Tibial artery (tissue), 4 donors: ENCODE measurements at regions of chr1 and their contacts with region 1.

Region 1: DNA sequence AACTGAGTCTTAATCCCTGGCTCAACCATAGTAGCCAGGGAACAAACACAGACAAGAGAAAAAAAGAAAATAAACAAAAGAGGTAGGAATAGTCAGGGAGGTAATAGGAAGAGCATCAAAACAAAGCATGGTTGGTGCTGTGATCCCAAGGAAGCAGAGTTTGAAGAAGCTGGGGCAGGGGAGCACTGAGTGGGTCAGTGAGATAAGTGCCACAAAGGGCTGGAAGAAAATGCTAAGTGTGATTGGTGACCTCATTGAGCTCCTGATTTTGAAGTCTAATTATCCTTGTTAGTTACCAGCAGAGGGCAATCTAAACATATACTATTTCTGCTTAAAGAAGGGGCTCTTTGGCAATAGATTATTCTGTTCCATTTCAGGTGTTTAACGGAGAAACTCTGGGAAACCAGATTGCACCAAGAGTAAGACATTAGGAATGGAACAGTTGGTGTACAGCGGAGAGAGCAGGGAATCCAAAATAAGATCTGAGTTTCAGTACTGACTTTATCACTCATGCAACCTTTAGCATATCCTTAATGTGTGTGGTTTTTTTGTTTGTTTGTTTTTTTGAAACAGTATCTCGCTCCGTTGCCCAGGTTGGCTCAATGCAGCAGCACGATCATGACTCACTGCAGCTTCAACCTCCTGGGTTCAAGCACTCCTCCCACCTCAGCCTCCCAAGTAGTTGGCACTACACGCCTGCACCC is 30.7 kb upstream of the KIAA1614 start:
- DNase-seq: no peak
- H3K4me3 ChIP-seq: no peak overlapping the region
- H3K27ac ChIP-seq: no peak overlapping the region
- H3K4me1 ChIP-seq: no peaks in the 10 kb centered on the region
- H3K27me3 ChIP-seq: no peaks in the 10 kb centered on the region
- CTCF ChIP-seq: peak; percentile 31 to 47

Region 2: GRCh38 chr1:181112071-181112929 is 230.3 kb after region 1 on chr1:
- intact Hi-C with region 1: no loop called
- DNase-seq: peak; percentile 83 to 88
- H3K4me3 ChIP-seq: no peak overlapping the region
- H3K27ac ChIP-seq: peak overlapping the region; percentile 24 to 53
- H3K4me1 ChIP-seq: peaks cover 0 to 25% (median 18%) of the 10 kb centered on the region in 4 donors
- H3K27me3 ChIP-seq: no peaks in the 10 kb centered on the region
- CTCF ChIP-seq: no peak

Region 3: DNA sequence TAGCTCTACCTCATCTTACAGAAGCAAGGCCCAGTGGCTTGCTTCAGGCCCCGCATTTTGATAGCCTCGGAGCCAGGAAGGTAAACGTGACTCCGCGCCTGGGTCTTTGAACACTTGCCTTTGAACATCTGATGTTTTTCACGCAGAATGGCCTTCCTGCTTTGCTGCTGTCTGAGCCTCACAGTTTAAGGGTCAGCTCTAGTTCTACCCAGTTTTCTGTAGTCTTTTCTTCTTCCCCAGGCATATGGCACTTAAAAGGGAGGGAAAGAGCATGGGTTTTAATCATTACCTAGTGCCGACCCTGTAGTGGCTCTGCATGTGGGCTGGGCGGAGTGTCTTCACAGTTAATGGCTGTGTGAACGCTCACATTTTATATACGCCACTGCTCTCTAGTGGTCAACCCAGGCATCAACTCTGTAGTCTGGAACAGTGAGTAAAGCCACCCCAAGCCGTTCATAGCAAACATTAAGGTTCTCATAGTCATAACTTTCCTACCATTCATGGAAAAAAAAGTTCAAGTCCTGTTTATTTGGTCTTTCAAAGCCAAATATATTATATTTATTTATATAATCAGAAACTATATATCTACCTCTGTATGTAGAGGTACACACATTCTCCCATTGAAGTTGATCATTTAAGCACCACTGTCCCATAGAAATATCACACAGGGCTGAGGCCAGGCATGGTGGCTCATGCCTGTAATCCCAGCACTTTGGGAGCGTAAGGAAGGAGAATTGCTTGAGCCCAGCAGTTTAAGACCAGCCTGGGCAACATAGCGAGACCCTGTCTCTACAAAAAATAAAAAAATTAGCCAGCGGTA is 284.6 kb after region 1 on chr1:
- intact Hi-C with region 1: loop called (anchors 2 kb)
- DNase-seq: peak; percentile 58 to 75
- H3K4me3 ChIP-seq: no peak overlapping the region
- H3K27ac ChIP-seq: no peak overlapping the region
- H3K4me1 ChIP-seq: peaks cover 0 to 5% (median 2%) of the 10 kb centered on the region in 4 donors
- H3K27me3 ChIP-seq: no peaks in the 10 kb centered on the region
- CTCF ChIP-seq: peak; percentile 84 to 86